Calu3 (cell line): ENCODE measurements at regions of chr16 and their contacts with region 1.

Region 1: DNA sequence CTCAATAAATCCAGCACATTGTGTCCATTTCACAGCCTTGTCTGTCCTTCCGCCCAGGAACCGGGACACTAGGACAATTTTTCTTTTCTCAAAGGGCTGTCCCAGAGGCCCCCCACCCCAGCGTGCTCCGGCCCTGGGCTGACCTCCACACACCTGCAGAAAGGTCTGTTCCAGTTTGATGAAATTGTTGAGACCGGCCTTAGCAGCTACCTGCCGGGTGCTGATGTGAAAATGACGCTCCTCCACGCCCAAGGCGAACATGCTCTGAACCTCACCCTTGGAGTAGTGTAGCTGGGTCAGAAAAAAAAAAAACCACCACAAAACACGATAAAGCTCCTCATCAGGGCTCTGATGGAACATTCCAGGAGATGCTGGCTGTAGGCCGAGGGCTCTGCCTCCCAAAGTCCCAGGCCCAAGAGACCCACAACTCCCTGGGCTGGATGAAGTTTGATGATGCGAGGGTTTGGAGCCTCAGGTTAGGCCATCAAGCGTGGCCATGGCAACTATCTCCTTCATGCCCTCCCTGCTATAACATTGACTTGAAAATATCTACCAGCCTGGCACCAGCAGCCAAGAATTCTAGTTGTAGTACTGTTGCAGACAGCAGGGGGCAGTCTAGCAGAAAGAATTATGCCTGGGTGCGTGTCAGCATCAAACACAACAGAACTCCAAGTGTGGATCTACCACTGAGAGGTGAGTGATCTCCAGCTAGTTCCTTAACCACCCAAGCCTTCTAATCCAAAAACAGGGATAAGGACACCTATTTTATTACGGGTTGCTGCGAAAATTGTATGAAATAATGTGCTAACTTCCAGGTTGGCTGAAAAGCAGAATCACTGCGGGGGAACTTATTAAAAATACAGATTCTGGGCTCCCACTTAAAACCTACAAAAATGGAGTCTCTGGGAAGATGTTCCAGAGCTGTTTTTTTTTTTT is 62.1 kb downstream of the RMI2 start:
- DNase-seq: peak; percentile 85
- H3K4me3 Mint-ChIP-seq: no peak overlapping the region
- H3K27ac Mint-ChIP-seq: no peak overlapping the region
- H3K4me1 Mint-ChIP-seq: no peaks in the 10 kb centered on the region
- H3K27me3 Mint-ChIP-seq: peaks cover 19% of the 10 kb centered on the region
- CTCF ChIP-seq: peak; percentile 72

Region 2: GRCh38 chr16:10964039-10964890 is 443.1 kb before region 1 on chr16:
- CTCF ChIA-PET with region 1: no interaction called
- intact Hi-C with region 1: loop called (anchors 1 kb)
- DNase-seq: peak; percentile 91
- H3K4me3 Mint-ChIP-seq: no peak overlapping the region
- H3K27ac Mint-ChIP-seq: no peak overlapping the region
- H3K4me1 Mint-ChIP-seq: no peaks in the 10 kb centered on the region
- H3K27me3 Mint-ChIP-seq: no peaks in the 10 kb centered on the region
- CTCF ChIP-seq: peak; percentile 95

Region 3: GRCh38 chr16:11535471-11535870 is 128.2 kb after region 1 on chr16:
- CTCF ChIA-PET with region 1: interaction called, 13 read pairs
- intact Hi-C with region 1: loop called (anchors 1 kb)
- DNase-seq: peak; percentile 30
- H3K4me3 Mint-ChIP-seq: no peak overlapping the region
- H3K27ac Mint-ChIP-seq: peak overlapping the region; percentile 50
- H3K4me1 Mint-ChIP-seq: peaks cover 42% of the 10 kb centered on the region
- H3K27me3 Mint-ChIP-seq: no peaks in the 10 kb centered on the region
- CTCF ChIP-seq: no peak

Region 4: GRCh38 chr16:11639925-11640899 is 232.9 kb after region 1 on chr16:
- CTCF ChIA-PET with region 1: interaction called, 11 read pairs
- intact Hi-C with region 1: loop called (anchors 2 kb)
- DNase-seq: peak; percentile 87
- H3K4me3 Mint-ChIP-seq: peak overlapping the region; percentile 44
- H3K27ac Mint-ChIP-seq: peak overlapping the region; percentile 99
- H3K4me1 Mint-ChIP-seq: peaks cover 57% of the 10 kb centered on the region
- H3K27me3 Mint-ChIP-seq: no peaks in the 10 kb centered on the region
- CTCF ChIP-seq: no peak

Region 5: DNA sequence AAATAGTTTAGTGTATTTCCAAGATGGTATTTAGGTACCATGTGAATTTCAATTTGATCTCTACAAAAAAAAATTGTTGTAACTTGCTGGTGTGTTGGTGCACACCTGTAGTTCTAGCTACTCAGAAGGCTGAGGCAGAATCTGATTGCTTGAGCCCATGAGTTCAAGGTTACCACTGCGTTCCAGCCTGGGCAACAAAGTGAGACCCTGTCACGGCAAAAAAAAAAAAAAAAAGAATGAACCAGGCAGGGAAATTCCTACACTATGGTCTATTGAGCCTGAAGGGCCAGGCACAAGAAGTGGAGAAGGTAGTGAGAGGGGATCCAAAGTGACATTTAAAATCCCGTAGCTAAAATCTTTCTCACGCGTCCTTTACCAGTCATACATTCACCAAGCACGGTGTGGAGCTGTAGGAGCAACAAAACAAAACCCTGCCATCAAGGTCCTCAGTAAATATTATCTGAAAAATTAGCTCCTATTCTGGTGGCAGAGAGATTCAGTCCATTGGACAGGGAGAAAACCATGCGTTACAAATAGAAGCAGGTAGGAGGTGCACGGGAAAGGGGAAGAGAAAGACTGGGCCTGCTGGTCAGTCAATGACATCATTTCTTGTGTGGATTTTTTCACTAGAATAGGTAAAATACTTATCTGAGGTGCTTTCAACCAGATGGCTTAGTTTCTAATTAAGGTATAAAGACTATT is 308.1 kb after region 1 on chr16:
- CTCF ChIA-PET with region 1: interaction called, 14 read pairs
- intact Hi-C with region 1: no loop called
- DNase-seq: no peak
- H3K4me3 Mint-ChIP-seq: no peak overlapping the region
- H3K27ac Mint-ChIP-seq: peak overlapping the region; percentile 28
- H3K4me1 Mint-ChIP-seq: peaks cover 38% of the 10 kb centered on the region
- H3K27me3 Mint-ChIP-seq: no peaks in the 10 kb centered on the region
- CTCF ChIP-seq: no peak